Ascending aorta (tissue), 2 donors: ENCODE measurements at regions of chr2 and their contacts with region 1.

Region 1: GRCh38 chr2:42828487-42829425 is 36.4 kb upstream of the HAAO start:
- DNase-seq: peak in 1 of 2 donors; percentile 83
- H3K4me3 ChIP-seq: no peak overlapping the region
- H3K27ac ChIP-seq: peak overlapping the region; percentile 11 to 56
- H3K4me1 ChIP-seq: peaks cover 0 to 17% of the 10 kb centered on the region in 2 donors
- H3K27me3 ChIP-seq: no peaks in the 10 kb centered on the region
- CTCF ChIP-seq: peak; percentile 87 to 94 (median 91)

Region 2: GRCh38 chr2:42922790-42923579 is 94.2 kb after region 1 on chr2:
- intact Hi-C with region 1: loop called (anchors 2 kb)
- DNase-seq: peak in 1 of 2 donors; percentile 94
- H3K4me3 ChIP-seq: no peak overlapping the region
- H3K27ac ChIP-seq: peak overlapping the region; percentile 97 to 98
- H3K4me1 ChIP-seq: peaks cover 35 to 77% of the 10 kb centered on the region in 2 donors
- H3K27me3 ChIP-seq: no peaks in the 10 kb centered on the region
- CTCF ChIP-seq: no peak

Region 3: GRCh38 chr2:43024515-43025011 is 195.8 kb after region 1 on chr2:
- intact Hi-C with region 1: loop called (anchors 5 kb)
- DNase-seq: peak; percentile 33 to 80
- H3K4me3 ChIP-seq: no peak overlapping the region
- H3K27ac ChIP-seq: no peak overlapping the region
- H3K4me1 ChIP-seq: no peaks in the 10 kb centered on the region
- H3K27me3 ChIP-seq: no peaks in the 10 kb centered on the region
- CTCF ChIP-seq: peak; percentile 84 to 93 (median 89)

Region 4: GRCh38 chr2:43542285-43542937 is 713.7 kb after region 1 on chr2:
- intact Hi-C with region 1: loop called (anchors 1 kb)
- DNase-seq: no peak
- H3K4me3 ChIP-seq: no peak overlapping the region
- H3K27ac ChIP-seq: peak overlapping the region in 1 of 2 donors; percentile 38
- H3K4me1 ChIP-seq: peaks cover 3 to 32% of the 10 kb centered on the region in 2 donors
- H3K27me3 ChIP-seq: no peaks in the 10 kb centered on the region
- CTCF ChIP-seq: peak; percentile 61 to 79 (median 62)

Region 5: GRCh38 chr2:43576981-43577892 is 748.5 kb after region 1 on chr2:
- intact Hi-C with region 1: loop called (anchors 2 kb)
- DNase-seq: no peak
- H3K4me3 ChIP-seq: no peak overlapping the region
- H3K27ac ChIP-seq: peak overlapping the region; percentile 2 to 46
- H3K4me1 ChIP-seq: peaks cover 0 to 3% of the 10 kb centered on the region in 2 donors
- H3K27me3 ChIP-seq: no peaks in the 10 kb centered on the region
- CTCF ChIP-seq: peak; percentile 25 to 82 (median 69)